Activated CD4-positive, alpha-beta T cell treated with anti-CD3 and anti-CD28 coated beads, Interleukin-2, amount 10 ng/mL, durations not matched to agents 24 days and 14 days (primary cell): ENCODE measurements at regions of chr22 and their contacts with region 1.

Region 1: GRCh38 chr22:30089655-30089974 is 9.4 kb downstream of the HORMAD2 start:
- DNase-seq: no peak
- H3K4me3 Mint-ChIP-seq: no peak overlapping the region
- H3K27ac Mint-ChIP-seq: no peak overlapping the region
- H3K4me1 Mint-ChIP-seq: peaks cover 24% of the 10 kb centered on the region
- H3K27me3 Mint-ChIP-seq: no peaks in the 10 kb centered on the region

Region 2: DNA sequence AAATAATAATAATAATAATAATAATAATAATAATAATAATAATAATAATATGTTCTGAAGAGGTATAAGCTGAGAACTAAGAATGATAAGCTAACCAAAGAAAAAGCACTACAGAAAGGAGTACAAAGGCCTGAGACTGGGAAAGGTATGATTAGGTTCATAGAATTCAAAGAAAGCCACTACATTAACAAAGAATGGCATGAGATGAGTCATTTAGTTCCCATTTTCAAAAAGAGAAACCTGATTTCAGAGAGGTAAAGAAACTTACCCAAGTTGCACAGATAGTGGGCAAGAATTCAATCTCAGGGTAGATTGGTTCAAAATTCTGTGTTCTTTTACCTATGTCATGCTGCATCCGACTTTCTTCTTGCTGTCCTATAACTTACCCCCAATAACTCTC is 1760.9 kb before region 1 on chr22:
- intact Hi-C with region 1: no loop called
- DNase-seq: no peak
- H3K4me3 Mint-ChIP-seq: no peak overlapping the region
- H3K27ac Mint-ChIP-seq: no peak overlapping the region
- H3K4me1 Mint-ChIP-seq: peaks cover 10% of the 10 kb centered on the region
- H3K27me3 Mint-ChIP-seq: peaks cover 3% of the 10 kb centered on the region

Region 3: DNA sequence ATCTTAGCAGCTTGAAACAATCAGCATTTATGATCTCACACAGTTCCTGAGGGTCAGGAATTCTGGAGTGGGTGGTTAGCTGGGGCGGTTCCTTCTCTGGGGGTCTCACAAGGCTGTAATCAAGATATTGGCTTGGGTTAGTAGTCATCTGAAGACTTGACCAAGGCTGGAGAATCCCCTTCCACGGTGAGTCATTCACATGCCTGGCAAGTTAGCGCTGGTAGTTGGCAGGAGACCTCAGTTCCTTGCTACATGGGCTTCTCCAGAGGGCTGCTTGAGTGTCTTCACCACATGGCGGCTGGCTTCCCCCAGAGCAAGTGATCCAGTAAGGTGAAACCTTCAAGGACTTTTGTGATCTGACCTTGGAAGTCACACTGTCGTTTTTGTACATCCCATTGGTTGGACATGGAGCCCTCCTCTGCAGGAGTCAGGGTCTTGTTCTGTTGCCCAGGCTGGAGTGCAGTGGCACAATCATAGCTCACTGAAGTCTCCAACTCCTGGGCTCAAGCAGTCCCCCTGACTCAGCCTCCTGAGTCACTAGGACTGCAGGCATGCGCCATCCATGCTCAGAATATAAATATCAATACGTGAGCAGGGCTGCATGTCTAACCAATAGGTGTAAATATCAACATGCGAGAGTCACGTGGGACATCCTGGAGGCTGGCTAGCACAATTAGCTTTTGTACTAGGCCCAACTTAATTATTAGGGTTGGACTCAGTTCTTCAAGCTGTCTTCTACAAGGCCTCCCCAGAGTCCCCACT is 501.5 kb before region 1 on chr22:
- intact Hi-C with region 1: loop called (anchors 2 kb)
- DNase-seq: no peak
- H3K4me3 Mint-ChIP-seq: no peak overlapping the region
- H3K27ac Mint-ChIP-seq: no peak overlapping the region
- H3K4me1 Mint-ChIP-seq: peaks cover 7% of the 10 kb centered on the region
- H3K27me3 Mint-ChIP-seq: no peaks in the 10 kb centered on the region

Region 4: DNA sequence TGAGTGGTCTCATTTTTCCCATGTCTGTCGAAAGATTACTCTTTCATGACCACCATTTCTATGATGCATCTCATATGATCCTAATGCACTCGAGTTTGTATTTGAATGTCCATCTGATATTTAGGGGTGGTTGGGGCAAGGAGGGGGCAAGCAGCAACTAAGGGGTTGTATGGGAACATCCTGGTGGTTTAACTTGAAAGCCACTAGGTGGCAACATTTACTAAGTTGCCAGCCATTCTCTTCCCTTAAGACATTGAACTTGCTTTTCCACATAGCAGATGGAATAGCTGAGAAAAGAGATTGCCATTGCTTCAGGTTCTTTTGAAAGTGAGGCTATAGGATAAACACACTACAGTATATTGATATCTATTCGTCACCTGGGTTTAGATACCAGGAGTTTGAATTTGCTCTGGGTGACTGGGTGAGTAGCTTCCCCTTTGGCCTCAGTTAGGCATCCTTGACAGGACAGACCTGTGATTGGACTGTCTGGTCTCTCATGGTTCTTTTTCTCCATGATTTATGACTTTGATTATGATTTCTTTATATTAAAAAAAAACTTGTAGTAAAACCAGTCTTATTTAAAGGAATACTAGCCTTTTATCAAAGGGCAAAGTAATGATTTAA is 453.8 kb before region 1 on chr22:
- intact Hi-C with region 1: loop called (anchors 1 kb)
- DNase-seq: peak; percentile 65
- H3K4me3 Mint-ChIP-seq: no peak overlapping the region
- H3K27ac Mint-ChIP-seq: no peak overlapping the region
- H3K4me1 Mint-ChIP-seq: peaks cover 28% of the 10 kb centered on the region
- H3K27me3 Mint-ChIP-seq: no peaks in the 10 kb centered on the region

Region 5: DNA sequence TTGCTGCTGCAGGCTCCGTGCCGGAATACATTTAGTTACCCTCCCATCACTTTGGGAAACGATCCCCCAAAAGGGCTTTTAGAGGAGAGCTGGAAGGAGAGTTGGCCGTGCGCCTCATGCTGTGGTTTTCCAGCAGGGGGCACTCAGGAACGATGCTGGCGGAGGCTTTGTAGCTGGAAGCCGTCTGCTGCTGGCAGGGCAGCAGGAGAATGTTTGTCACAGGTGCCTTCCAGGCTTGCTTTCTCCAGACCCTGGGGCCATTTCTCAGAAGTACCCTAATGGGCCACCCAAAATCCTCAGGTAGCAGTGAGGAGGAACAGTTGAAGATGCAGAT is 399.8 kb before region 1 on chr22:
- intact Hi-C with region 1: loop called (anchors 5 kb)
- DNase-seq: peak; percentile 80
- H3K4me3 Mint-ChIP-seq: no peak overlapping the region
- H3K27ac Mint-ChIP-seq: no peak overlapping the region
- H3K4me1 Mint-ChIP-seq: no peaks in the 10 kb centered on the region
- H3K27me3 Mint-ChIP-seq: no peaks in the 10 kb centered on the region

Region 6: DNA sequence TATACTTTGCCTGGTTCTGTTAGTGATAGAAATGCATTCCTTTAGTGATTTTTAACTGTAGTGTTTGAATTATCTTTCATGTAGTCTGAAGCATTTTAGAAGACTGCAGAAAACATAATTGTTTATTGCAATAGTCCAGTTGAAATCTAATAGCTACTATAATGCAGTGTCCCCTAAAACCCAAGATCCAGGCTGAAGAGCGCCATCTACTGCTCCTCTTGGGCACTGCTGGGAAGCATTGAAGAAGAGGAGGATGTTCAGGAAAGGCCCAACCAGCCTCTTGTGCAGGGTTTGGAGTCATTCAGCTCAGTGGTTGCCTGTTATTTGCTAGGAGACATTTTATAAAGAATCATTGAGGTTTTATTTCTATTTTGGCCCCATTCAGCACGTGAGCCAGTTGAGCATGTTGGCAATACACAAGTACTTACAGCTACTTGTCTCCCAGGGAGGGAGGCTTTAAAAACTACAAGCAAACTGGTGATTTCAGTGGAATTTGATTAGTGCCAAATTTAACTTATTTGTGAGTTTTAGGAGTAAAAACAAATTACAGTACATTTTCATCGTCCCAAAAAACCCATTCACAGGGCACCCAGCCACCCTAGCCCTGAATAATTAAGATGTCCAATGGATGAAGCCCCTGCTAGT is 84.3 kb before region 1 on chr22:
- intact Hi-C with region 1: loop called (anchors 5 kb)
- DNase-seq: peak; percentile 90
- H3K4me3 Mint-ChIP-seq: no peak overlapping the region
- H3K27ac Mint-ChIP-seq: no peak overlapping the region
- H3K4me1 Mint-ChIP-seq: peaks cover 10% of the 10 kb centered on the region
- H3K27me3 Mint-ChIP-seq: no peaks in the 10 kb centered on the region

Region 7: GRCh38 chr22:30054588-30055033 is 35.0 kb before region 1 on chr22:
- intact Hi-C with region 1: loop called (anchors 5 kb)
- DNase-seq: no peak
- H3K4me3 Mint-ChIP-seq: no peak overlapping the region
- H3K27ac Mint-ChIP-seq: no peak overlapping the region
- H3K4me1 Mint-ChIP-seq: no peaks in the 10 kb centered on the region
- H3K27me3 Mint-ChIP-seq: no peaks in the 10 kb centered on the region

Region 8: DNA sequence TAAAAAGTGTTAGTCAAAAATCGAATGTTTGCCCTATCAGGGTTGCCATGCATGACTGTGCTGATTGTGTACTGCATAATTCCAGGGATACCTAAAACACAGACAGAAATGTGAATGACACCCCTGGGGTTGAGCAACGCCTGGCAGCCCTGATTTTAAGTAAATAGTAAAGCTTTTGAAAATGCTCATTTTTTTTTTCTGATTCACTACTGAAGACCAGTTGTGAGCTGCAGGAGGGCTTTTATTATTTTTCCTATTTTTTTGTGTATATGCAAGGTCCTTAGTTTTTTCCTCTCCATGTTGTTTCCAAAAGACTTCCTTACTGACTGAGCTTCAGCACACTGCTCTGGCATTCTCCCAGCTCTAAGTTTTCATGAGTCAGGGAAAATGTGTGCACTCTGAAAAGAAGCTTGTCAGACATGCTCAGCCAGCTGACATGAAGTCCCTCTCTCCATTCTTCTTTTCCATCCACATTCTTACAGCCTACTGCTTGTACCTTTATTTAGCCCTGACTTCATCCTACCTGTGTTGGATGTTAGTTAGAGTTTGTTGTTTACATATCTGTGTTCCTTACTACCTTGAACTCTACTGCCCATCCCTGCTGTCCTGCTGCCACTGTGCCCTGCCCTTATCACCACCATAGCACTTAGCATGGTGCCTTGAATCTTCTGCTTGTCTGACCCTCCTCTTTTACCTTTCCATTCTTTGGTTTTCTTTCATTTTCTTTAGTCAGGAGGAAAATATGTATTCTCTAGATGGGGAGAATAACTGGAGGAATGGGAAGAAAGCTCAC is 70.1 kb after region 1 on chr22:
- intact Hi-C with region 1: no loop called
- DNase-seq: no peak
- H3K4me3 Mint-ChIP-seq: peak overlapping the region; percentile 37
- H3K27ac Mint-ChIP-seq: peak overlapping the region; percentile 96
- H3K4me1 Mint-ChIP-seq: peaks cover 53% of the 10 kb centered on the region
- H3K27me3 Mint-ChIP-seq: no peaks in the 10 kb centered on the region